ENCODE measurements at regions of chr5 and their contacts with region 1.

Region 1: GRCh38 chr5:170225326-170226128 is 7.3 kb upstream of the C5orf58 start:
- DNase-seq: peak; percentile 38
- H3K4me3 ChIP-seq: no peak overlapping the region
- H3K27ac ChIP-seq: no peak overlapping the region
- H3K4me1 ChIP-seq: no peaks in the 10 kb centered on the region
- H3K27me3 ChIP-seq: no peaks in the 10 kb centered on the region
- CTCF ChIP-seq: peak; percentile 69 to 74

Region 2: DNA sequence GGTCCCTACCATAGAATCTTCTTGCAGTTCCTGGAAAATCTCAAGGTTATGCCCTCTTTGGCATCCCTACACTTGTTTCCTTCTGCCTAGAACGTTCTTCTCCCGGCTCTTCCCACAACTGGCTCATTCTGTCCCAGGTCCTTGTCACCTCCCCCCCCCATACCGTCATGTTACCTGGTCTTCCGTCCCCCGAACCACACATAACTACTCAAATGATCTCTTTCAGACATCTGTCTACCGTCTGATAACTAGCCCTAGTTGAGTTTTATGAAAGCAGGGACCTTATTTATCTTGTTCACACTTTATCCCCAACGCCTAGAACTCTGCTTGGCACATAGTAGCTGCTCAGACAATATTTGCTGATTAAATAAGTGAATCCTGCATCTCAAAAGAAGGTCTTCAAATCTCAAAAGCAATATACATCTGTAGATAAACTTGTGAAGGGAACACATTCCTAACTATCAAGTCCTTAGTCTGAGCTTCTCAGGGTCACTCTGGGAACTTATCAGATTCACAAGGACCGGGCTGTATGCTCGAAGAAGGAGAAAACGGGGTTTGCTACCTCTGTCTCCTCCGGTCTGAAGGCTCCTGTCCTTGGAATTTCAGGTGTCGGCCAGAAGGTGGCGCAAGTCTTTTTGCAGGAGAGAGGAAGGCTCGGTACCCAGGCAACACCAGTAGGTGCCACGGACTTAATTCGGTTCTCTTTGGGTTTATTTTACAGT is 42.1 kb after region 1 on chr5:
- CTCF ChIA-PET with region 1: no interaction called
- dilution Hi-C with region 1: no loop called
- in situ Hi-C with region 1: no loop called
- intact Hi-C with region 1: loop called (anchors 1 kb)
- DNase-seq: peak; percentile 42
- H3K4me3 ChIP-seq: no peak overlapping the region
- H3K27ac ChIP-seq: no peak overlapping the region
- H3K4me1 ChIP-seq: no peaks in the 10 kb centered on the region
- H3K27me3 ChIP-seq: peaks cover 7% of the 10 kb centered on the region
- CTCF ChIP-seq: peak; percentile 85 to 87

Region 3: GRCh38 chr5:170293273-170293672 is 67.7 kb after region 1 on chr5:
- CTCF ChIA-PET with region 1: no interaction called
- dilution Hi-C with region 1: loop called (anchors 5 kb)
- in situ Hi-C with region 1: no loop called
- intact Hi-C with region 1: no loop called
- DNase-seq: no peak
- H3K4me3 ChIP-seq: no peak overlapping the region
- H3K27ac ChIP-seq: no peak overlapping the region
- H3K4me1 ChIP-seq: no peaks in the 10 kb centered on the region
- H3K27me3 ChIP-seq: peaks cover 2% of the 10 kb centered on the region
- CTCF ChIP-seq: no peak

Region 4: DNA sequence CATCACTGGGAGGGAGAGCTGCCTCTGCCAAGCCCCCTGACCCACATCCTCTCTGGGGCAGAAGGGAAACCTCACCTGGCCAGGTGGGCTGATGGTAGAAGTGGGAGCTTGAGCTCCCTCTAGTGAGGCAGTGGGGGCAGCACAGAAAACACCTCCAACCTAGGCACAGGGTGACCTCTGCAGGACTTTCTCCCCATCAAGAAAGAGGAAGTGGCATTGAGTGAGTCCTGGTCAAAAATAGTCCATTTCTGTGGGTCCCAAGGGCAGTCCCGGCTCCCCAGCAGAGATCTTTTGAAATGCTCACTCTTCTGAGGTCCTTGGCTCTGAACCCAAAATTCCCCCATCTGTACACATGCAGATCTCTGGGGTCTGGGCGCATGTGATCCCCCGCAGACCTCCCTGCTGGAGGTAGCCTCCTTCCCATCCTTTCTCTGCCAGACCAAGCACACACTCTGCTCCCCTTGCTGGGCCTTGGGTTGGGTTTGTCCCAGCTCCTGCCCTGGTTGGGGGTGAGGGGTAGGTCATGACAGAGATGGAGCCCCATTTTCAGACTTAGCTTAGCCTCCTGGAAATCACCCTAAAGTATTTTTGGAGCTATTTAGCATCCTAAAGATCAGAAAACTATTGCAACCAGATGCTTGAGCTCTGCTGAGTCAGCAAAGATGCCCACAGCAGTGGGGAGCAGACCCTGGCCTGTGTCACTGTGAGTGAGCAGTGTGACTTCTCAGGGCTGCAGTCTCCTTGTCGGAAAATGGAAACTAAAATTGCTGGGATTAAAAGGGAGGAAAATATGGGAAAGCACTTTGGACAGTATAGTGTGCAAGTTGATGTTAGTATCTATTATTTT is 113.6 kb after region 1 on chr5:
- CTCF ChIA-PET with region 1: no interaction called
- dilution Hi-C with region 1: no loop called
- in situ Hi-C with region 1: no loop called
- intact Hi-C with region 1: loop called (anchors 1 kb)
- DNase-seq: no peak
- H3K4me3 ChIP-seq: no peak overlapping the region
- H3K27ac ChIP-seq: no peak overlapping the region
- H3K4me1 ChIP-seq: no peaks in the 10 kb centered on the region
- H3K27me3 ChIP-seq: no peaks in the 10 kb centered on the region
- CTCF ChIP-seq: peak; percentile 45 to 54

Region 5: DNA sequence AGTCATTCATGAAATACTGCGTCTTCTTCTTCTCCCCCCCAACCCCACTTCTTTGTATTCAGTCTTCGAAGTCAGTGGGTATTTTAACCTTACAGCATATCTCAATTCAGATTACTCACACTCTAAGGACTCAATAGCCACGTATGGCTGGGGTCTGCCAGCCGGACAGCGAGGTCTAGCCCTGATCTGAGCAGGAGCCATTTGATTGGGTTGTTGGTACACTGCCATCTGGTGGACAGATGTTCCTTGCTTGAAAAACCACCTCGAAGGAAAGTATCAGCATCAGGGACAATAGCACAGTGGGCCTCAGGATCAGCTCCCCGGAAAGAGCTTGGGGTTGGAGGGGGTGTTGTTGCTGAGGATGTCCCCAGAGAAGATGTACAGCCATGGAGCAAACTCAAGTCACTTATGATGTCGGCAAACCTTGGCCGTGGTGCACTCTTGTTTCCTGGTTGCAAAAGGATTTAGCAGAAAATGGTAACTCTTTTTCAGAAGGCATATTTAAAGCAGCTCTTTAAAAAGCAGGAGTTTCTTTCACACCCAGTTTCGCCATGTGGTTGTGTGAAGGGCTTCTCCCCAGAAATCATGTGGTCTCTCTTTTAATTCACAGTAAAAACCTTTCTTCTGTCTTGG is 195.4 kb after region 1 on chr5:
- CTCF ChIA-PET with region 1: no interaction called
- dilution Hi-C with region 1: no loop called
- in situ Hi-C with region 1: loop called (anchors 5 to 10 kb)
- intact Hi-C with region 1: loop called (anchors 1 kb)
- DNase-seq: peak; percentile 34
- H3K4me3 ChIP-seq: no peak overlapping the region
- H3K27ac ChIP-seq: no peak overlapping the region
- H3K4me1 ChIP-seq: no peaks in the 10 kb centered on the region
- H3K27me3 ChIP-seq: no peaks in the 10 kb centered on the region
- CTCF ChIP-seq: peak; percentile 64 to 78

Region 6: DNA sequence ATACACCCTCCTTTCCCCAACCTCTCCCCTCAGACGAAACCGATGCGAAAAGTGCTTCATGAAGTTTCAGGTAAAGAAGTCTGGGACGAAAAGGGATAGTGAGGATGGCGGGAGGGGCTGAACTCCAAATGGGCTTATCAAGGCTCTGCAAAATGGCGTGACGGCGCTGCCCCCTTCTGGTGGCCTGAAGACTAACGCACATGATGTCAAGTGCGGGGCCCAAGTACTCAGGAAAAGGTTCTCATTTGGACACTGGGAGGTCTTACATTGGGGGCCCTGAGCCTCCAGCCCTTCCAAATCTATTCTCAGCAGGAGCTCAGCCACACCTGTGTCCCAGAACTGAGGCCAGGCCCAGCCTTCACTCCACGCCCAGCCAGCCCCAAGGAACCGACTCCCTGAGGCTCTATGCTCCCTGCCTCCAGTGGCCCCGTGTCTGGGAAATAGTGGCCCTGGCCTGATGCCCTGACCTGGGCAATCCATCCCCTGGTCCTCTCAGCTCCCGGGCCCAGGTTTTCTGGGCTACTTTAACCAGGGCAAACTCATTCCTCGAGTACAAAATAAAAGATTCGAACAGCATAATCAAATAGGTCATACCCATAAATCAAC is 398.2 kb after region 1 on chr5:
- CTCF ChIA-PET with region 1: no interaction called
- dilution Hi-C with region 1: no loop called
- in situ Hi-C with region 1: no loop called
- intact Hi-C with region 1: loop called (anchors 1 kb)
- DNase-seq: peak; percentile 15
- H3K4me3 ChIP-seq: no peak overlapping the region
- H3K27ac ChIP-seq: no peak overlapping the region
- H3K4me1 ChIP-seq: no peaks in the 10 kb centered on the region
- H3K27me3 ChIP-seq: no peaks in the 10 kb centered on the region
- CTCF ChIP-seq: peak; percentile 76 to 82

Region 7: GRCh38 chr5:170633235-170634081 is 407.9 kb after region 1 on chr5:
- CTCF ChIA-PET with region 1: no interaction called
- dilution Hi-C with region 1: no loop called
- in situ Hi-C with region 1: no loop called
- intact Hi-C with region 1: loop called (anchors 1 kb)
- DNase-seq: peak; percentile 27
- H3K4me3 ChIP-seq: peak overlapping the region in 1 of 3 experiments; percentile 39
- H3K27ac ChIP-seq: no peak overlapping the region
- H3K4me1 ChIP-seq: peaks cover 15% of the 10 kb centered on the region
- H3K27me3 ChIP-seq: no peaks in the 10 kb centered on the region
- CTCF ChIP-seq: no peak

Measured in mammary epithelial cell (primary cell).